Mucosa of descending colon (tissue), 3 donors: ENCODE measurements at regions of chr1 and their contacts with region 1.

Region 1: GRCh38 chr1:203273206-203273868 is 32.0 kb upstream of the BTG2 start:
- DNase-seq: peak; percentile 92 to 95 (median 94)
- ATAC-seq: peak; percentile 88
- H3K4me3 ChIP-seq: no peak overlapping the region
- H3K4me1 ChIP-seq: peaks cover 34% of the 10 kb centered on the region
- CTCF ChIP-seq: peak; percentile 96

Region 2: DNA sequence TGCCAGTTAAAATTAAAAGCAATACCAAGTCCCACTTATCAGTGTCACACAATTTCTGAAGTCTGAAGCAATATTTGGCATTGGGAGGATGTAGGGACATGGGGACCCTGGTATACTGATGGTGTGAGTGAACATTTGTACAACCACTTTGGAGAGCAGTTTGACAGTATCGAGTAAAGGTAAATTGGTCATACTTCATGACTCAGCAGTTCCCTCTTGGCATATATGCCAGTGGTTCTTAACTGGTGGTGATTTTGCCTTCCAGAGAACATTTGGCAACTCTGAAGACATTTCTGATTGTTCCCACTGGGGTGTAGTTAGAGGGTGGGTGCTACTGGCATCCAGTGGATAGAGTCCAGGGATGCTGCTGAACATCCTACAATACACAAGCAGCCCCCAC is 57.9 kb after region 1 on chr1:
- intact Hi-C with region 1: loop called (anchors 5 kb)
- DNase-seq: no peak
- ATAC-seq: no peak
- H3K4me3 ChIP-seq: no peak overlapping the region
- H3K4me1 ChIP-seq: peaks cover 15% of the 10 kb centered on the region
- CTCF ChIP-seq: no peak

Region 3: GRCh38 chr1:203440771-203441170 is 167.4 kb after region 1 on chr1:
- intact Hi-C with region 1: loop called in 1 of 2 experiments (anchors 10 kb)
- DNase-seq: peak; percentile 80 to 84 (median 83)
- ATAC-seq: peak; percentile 91
- H3K4me3 ChIP-seq: no peak overlapping the region
- H3K4me1 ChIP-seq: peaks cover 19% of the 10 kb centered on the region
- CTCF ChIP-seq: peak; percentile 45

Region 4: GRCh38 chr1:203480525-203481084 is 207.3 kb after region 1 on chr1:
- intact Hi-C with region 1: loop called (anchors 10 kb)
- DNase-seq: peak; percentile 85 to 90 (median 87)
- ATAC-seq: peak; percentile 96
- H3K4me3 ChIP-seq: no peak overlapping the region
- H3K4me1 ChIP-seq: peaks cover 7% of the 10 kb centered on the region
- CTCF ChIP-seq: no peak